GM12878 (cell line): ENCODE measurements at regions of chr17 and their contacts with region 1.

Region 1: GRCh38 chr17:67575325-67575724 is 142.4 kb upstream of the NOL11 start:
- DNase-seq: peak; percentile 68
- ATAC-seq: peak; percentile 49
- H3K4me3 ChIP-seq: peak overlapping the region; percentile 68; the same call in 1 of the 2 replicates
- H3K27ac ChIP-seq: peak overlapping the region; percentile 88
- H3K4me1 ChIP-seq: peaks cover 83% of the 10 kb centered on the region
- H3K27me3 ChIP-seq: no peaks in the 10 kb centered on the region
- CTCF ChIP-seq: peak; percentile 53 to 60 (median 59)
- EP300 ChIP-seq: 0 out of 4 replicates have a peak, but pooled peaks of 1 of the 2 experiments have one; percentile 28
- POLR2A ChIP-seq: peak; percentile 60
- RAD21 ChIP-seq: peak; percentile 73

Region 2: GRCh38 chr17:67390646-67391384 is 184.5 kb before region 1 on chr17:
- CTCF ChIA-PET with region 1: interaction called, 5 read pairs
- POLR2A ChIA-PET with region 1: no interaction called
- RAD21 ChIA-PET with region 1: interaction called, 4 read pairs
- SMC1A ChIA-PET with region 1: no interaction called
- in situ Hi-C with region 1: no loop called
- intact Hi-C with region 1: loop called (anchors 1 kb)
- DNase-seq: peak; percentile 87
- ATAC-seq: peak; percentile 97
- H3K4me3 ChIP-seq: peak overlapping the region; percentile 24; the same call in 1 of the 2 replicates
- H3K27ac ChIP-seq: peak overlapping the region; percentile 80
- H3K4me1 ChIP-seq: peaks cover 36% of the 10 kb centered on the region
- H3K27me3 ChIP-seq: no peaks in the 10 kb centered on the region
- CTCF ChIP-seq: peak in 1 of 3 experiments; percentile 8; a peak in 1 of 6 replicates
- EP300 ChIP-seq: peak; percentile 78 to 85; a peak in 3 of 4 replicates
- POLR2A ChIP-seq: peak; percentile 41; the same call in 1 of the 2 replicates
- RAD21 ChIP-seq: peak; percentile 9; the same call in 1 of the 2 replicates

Region 3: GRCh38 chr17:67559377-67559966 is 15.9 kb before region 1 on chr17:
- CTCF ChIA-PET with region 1: interaction called, 58 read pairs
- POLR2A ChIA-PET with region 1: interaction called, 14 read pairs
- RAD21 ChIA-PET with region 1: interaction called, 21 read pairs
- SMC1A ChIA-PET with region 1: interaction called, 58 read pairs
- in situ Hi-C with region 1: no loop called
- intact Hi-C with region 1: no loop called
- DNase-seq: no peak
- ATAC-seq: peak; percentile 90
- H3K4me3 ChIP-seq: no peak overlapping the region
- H3K27ac ChIP-seq: no peak overlapping the region
- H3K4me1 ChIP-seq: peaks cover 5% of the 10 kb centered on the region
- H3K27me3 ChIP-seq: no peaks in the 10 kb centered on the region
- CTCF ChIP-seq: peak; percentile 53 to 66 (median 60)
- EP300 ChIP-seq: no peak
- POLR2A ChIP-seq: no peak
- RAD21 ChIP-seq: peak; percentile 65

Region 4: GRCh38 chr17:67602956-67603355 is 27.6 kb after region 1 on chr17:
- CTCF ChIA-PET with region 1: interaction called, 38 read pairs
- POLR2A ChIA-PET with region 1: interaction called, 6 read pairs
- RAD21 ChIA-PET with region 1: interaction called, 36 read pairs
- SMC1A ChIA-PET with region 1: interaction called, 51 read pairs
- in situ Hi-C with region 1: no loop called
- intact Hi-C with region 1: loop called (anchors 1 kb)
- DNase-seq: no peak
- ATAC-seq: peak; percentile 97
- H3K4me3 ChIP-seq: no peak overlapping the region
- H3K27ac ChIP-seq: peak overlapping the region; percentile 46
- H3K4me1 ChIP-seq: peaks cover 33% of the 10 kb centered on the region
- H3K27me3 ChIP-seq: no peaks in the 10 kb centered on the region
- CTCF ChIP-seq: peak; percentile 70 to 87 (median 73); a peak in 5 of 6 replicates
- EP300 ChIP-seq: no peak
- POLR2A ChIP-seq: no peak
- RAD21 ChIP-seq: peak; percentile 95

Region 5: DNA sequence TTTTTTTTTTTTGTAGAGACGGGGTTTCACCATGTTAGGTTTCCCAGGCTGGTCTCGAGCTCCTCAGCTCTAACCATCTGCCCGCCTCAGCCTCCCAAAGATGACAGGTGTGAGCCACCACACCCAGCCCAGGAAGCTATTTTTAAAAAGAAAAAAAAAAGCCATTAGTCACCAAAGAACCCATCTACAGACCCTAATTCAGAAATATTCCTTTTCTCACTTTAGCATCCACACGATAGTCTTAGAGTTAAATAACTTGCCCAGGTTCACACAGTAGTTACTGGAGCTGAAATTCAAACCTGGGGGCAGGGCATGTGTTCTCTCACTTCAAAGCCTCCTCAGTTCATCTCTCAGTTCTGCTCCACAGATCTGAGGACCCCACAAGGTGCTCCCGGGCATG is 72.2 kb after region 1 on chr17:
- CTCF ChIA-PET with region 1: interaction called, 36 read pairs
- POLR2A ChIA-PET with region 1: interaction called, 53 read pairs
- RAD21 ChIA-PET with region 1: interaction called, 40 read pairs
- SMC1A ChIA-PET with region 1: interaction called, 156 read pairs
- in situ Hi-C with region 1: no loop called
- intact Hi-C with region 1: loop called (anchors 1 kb)
- DNase-seq: peak; percentile 67
- ATAC-seq: peak; percentile 59
- H3K4me3 ChIP-seq: no peak overlapping the region
- H3K27ac ChIP-seq: peak overlapping the region; percentile 92
- H3K4me1 ChIP-seq: peaks cover 60% of the 10 kb centered on the region
- H3K27me3 ChIP-seq: no peaks in the 10 kb centered on the region
- CTCF ChIP-seq: no peak
- EP300 ChIP-seq: peak in 1 of 2 experiments; percentile 78; a peak in 2 of 4 replicates
- POLR2A ChIP-seq: no peak
- RAD21 ChIP-seq: peak; percentile 34; the same call in 1 of the 2 replicates

Region 6: GRCh38 chr17:67689534-67690177 is 114.3 kb after region 1 on chr17:
- CTCF ChIA-PET with region 1: interaction called, 5 read pairs
- POLR2A ChIA-PET with region 1: no interaction called
- RAD21 ChIA-PET with region 1: no interaction called
- SMC1A ChIA-PET with region 1: interaction called, 5 read pairs
- in situ Hi-C with region 1: no loop called
- intact Hi-C with region 1: loop called (anchors 5 kb)
- DNase-seq: peak; percentile 37
- ATAC-seq: peak; percentile 82
- H3K4me3 ChIP-seq: no peak overlapping the region
- H3K27ac ChIP-seq: peak overlapping the region; percentile 24; the same call in 1 of the 2 replicates
- H3K4me1 ChIP-seq: peaks cover 10% of the 10 kb centered on the region
- H3K27me3 ChIP-seq: no peaks in the 10 kb centered on the region
- CTCF ChIP-seq: peak; percentile 63 to 73 (median 72)
- EP300 ChIP-seq: no peak
- POLR2A ChIP-seq: no peak
- RAD21 ChIP-seq: peak; percentile 85